ENCODE measurements at regions of chr12 and their contacts with region 1.

Region 1: GRCh38 chr12:92027701-92028440 is 117.8 kb downstream of the BTG1 start:
- DNase-seq: no peak

Region 2: GRCh38 chr12:92059976-92060375 is 32.1 kb after region 1 on chr12:
- CTCF ChIA-PET with region 1: no interaction called
- POLR2A ChIA-PET with region 1: no interaction called
- DNase-seq: no peak

Region 3: GRCh38 chr12:92078167-92079053 is 50.5 kb after region 1 on chr12:
- CTCF ChIA-PET with region 1: interaction called, 13 read pairs
- POLR2A ChIA-PET with region 1: no interaction called
- DNase-seq: no peak